Psoas muscle (tissue), 8 donors: ENCODE measurements at regions of chr12 and their contacts with region 1.

Region 1: GRCh38 chr12:88044035-88044434 is 14.8 kb upstream of the C12orf50 start:
- DNase-seq: no peak
- ATAC-seq: no peak
- H3K4me3 ChIP-seq: no peak overlapping the region
- H3K27ac ChIP-seq: no peak overlapping the region
- H3K4me1 ChIP-seq: no peaks in the 10 kb centered on the region
- H3K27me3 ChIP-seq: no peaks in the 10 kb centered on the region
- CTCF ChIP-seq: no peak

Region 2: GRCh38 chr12:88132390-88132789 is 88.4 kb after region 1 on chr12:
- intact Hi-C with region 1: loop called in 1 of 2 experiments (anchors 10 kb)
- DNase-seq: no peak
- ATAC-seq: no peak
- H3K4me3 ChIP-seq: no peak overlapping the region
- H3K27ac ChIP-seq: no peak overlapping the region
- H3K4me1 ChIP-seq: no peaks in the 10 kb centered on the region
- H3K27me3 ChIP-seq: no peaks in the 10 kb centered on the region
- CTCF ChIP-seq: no peak

Region 3: DNA sequence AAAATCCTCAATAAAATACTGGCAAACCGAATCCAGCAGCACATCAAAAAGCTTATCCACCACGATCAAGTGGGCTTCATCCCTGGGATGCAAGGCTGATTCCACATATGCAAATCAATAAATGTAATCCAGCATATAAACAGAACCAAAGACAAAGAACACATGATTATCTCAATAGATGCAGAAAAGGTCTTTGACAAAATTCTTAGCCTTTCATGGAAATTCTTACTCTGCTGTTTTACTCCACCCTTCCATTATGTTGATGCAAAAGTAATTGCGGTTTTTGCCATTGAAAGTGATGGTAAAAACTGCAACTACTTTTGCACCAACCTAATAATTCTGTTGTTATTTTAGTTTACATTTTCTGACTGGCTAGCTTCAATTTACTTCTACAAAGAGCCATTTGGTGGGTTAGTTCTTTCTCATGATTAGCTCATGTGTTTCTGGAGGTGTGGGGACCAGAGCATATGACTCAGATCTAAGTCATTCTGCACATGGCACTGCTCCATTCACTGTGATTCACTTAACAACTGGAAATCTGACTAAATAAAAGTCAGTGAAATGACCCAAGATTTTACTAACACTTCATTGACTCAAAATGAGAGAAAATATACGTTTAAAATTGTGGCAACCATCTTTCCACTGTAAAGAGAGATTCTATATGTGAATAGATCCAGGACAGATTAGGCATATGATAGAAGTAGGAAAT is 198.0 kb after region 1 on chr12:
- intact Hi-C with region 1: no loop called
- DNase-seq: peak in 1 of 2 donors; percentile 17
- ATAC-seq: no peak
- H3K4me3 ChIP-seq: no peak overlapping the region
- H3K27ac ChIP-seq: no peak overlapping the region
- H3K4me1 ChIP-seq: no peaks in the 10 kb centered on the region
- H3K27me3 ChIP-seq: no peaks in the 10 kb centered on the region
- CTCF ChIP-seq: no peak

Region 4: DNA sequence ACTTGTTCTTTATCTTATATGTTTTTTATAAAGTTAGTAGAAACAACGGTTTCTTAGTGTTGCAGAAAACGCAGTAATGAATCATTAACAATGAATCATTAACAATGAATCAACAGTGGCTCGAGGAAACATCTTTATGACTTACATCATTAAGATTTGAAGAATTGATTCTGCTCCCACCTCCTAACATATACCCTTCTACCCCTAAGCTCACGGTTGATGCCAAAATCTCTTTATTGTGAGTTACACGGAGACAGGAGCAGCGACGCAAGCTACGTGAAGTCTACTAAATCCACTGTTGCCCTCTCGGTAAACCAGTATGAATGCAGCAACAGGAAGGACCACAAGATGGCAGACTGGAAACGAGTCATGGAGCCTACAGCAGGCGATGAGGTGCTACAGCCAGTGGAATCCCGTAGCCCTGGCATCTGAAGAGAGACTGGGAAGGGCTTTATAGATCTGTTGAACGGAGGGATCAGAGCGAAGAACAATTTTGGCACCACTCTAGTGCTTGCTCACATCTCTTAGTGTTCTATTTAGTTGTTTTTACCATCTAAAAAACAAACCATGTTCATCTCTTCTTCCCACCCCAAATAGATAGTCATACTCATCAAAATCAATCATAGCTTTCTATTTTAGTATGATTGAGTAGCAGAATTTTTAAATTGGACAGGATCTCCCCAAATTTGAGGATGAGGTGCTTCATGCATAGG is 975.5 kb after region 1 on chr12:
- intact Hi-C with region 1: no loop called
- DNase-seq: peak; percentile 51 to 60
- ATAC-seq: peak; percentile 88 to 99 (median 91)
- H3K4me3 ChIP-seq: peak overlapping the region; percentile 40
- H3K27ac ChIP-seq: no peak overlapping the region
- H3K4me1 ChIP-seq: no peaks in the 10 kb centered on the region
- H3K27me3 ChIP-seq: no peaks in the 10 kb centered on the region
- CTCF ChIP-seq: peak; percentile 81